ENCODE measurements at regions of chr1 and their contacts with region 1.

Region 1: GRCh38 chr1:145996433-145997015 is at the start of gene TXNIP:
- DNase-seq: peak; percentile 93
- H3K4me3 ChIP-seq: peak within 1 kb of the TSS; percentile 93
- H3K27ac ChIP-seq: peak within 1 kb of the TSS; percentile 78
- H3K4me1 ChIP-seq: peaks cover 67% of the 10 kb centered on the region
- H3K27me3 ChIP-seq: no peaks in the 10 kb centered on the region
- CTCF ChIP-seq: no peak
- total RNA-seq, gene TXNIP: 95.7 and 131 TPM in 2 replicates

Region 2: DNA sequence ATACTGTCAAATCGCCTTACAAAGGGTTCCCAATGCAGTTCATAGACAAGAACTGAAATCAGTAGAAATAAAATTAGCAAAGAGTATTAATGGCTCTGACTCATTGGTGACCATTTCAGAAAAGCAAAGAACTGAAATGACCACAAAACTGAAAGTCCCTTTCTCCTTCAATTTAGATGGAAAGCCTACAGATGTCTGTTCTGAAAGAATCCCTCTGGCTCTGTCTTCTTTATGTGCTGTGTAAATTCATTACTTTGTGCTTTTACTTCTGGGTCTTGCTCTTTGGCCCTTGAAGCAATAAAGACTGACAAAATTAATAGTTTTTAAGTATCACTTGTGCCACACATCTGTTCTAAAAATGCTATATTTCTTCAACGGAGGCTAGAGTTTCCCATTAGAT is 451.5 kb before region 1 on chr1:
- CTCF ChIA-PET with region 1: no interaction called
- POLR2A ChIA-PET with region 1: no interaction called
- intact Hi-C with region 1: no loop called
- DNase-seq: no peak
- H3K4me3 ChIP-seq: no peak overlapping the region
- H3K27ac ChIP-seq: no peak overlapping the region
- H3K4me1 ChIP-seq: no peaks in the 10 kb centered on the region
- H3K27me3 ChIP-seq: no peaks in the 10 kb centered on the region
- CTCF ChIP-seq: no peak

Region 3: DNA sequence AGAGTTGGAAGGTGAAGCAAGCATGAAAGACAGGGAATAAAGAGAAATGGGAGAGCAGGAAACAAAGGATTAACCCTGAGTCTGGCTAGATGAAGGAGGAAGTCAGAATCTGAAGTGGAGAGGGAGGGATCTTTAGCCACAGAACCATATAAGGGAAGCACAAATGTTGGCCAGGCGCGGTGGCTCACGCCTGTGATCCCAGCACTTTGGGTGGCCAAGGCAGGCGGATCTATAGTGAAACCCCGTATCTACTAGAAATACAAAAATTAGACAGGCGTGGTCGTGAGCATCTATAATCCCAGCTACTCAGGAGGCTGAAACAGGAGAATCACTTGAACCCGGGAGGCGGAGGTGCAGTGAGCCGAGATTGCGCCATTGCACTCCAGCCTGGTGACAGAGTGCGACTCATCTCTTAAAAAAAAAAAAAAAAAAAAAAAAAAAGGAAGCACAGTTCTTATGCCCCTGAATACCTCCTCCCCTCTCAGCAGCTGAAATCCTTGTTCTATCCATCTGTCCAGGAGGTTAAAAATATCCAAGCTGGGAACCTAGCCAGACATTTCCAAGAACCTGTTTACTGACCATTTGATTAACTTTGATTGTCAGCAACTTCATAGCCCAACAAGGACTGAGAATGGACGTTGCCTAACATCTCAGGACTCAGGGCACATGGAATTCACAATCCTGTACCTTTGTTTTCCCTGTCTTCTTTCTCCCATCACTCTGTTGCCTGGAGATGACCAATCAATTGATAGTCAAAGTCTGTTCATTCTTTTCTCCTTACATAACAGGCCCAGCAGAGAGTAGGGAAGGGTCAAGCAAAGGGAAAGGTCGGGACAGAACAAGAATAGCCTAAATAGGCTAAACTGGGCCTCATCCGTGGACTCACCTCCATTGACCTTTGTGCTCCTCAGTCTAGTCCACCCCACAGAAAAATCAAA is 10.8 kb before region 1 on chr1:
- CTCF ChIA-PET with region 1: no interaction called
- POLR2A ChIA-PET with region 1: interaction called, 3 read pairs
- intact Hi-C with region 1: loop called (anchors 1 kb)
- DNase-seq: peak; percentile 33 to 78
- H3K4me3 ChIP-seq: no peak overlapping the region
- H3K27ac ChIP-seq: peak overlapping the region; percentile 40
- H3K4me1 ChIP-seq: peaks cover 46% of the 10 kb centered on the region
- H3K27me3 ChIP-seq: no peaks in the 10 kb centered on the region
- CTCF ChIP-seq: no peak